Natural killer cell (primary cell): ENCODE measurements at regions of chr3 and their contacts with region 1.

Region 1: GRCh38 chr3:167723070-167723469 is 11.6 kb downstream of the PDCD10 start:
- DNase-seq: no peak
- ATAC-seq: no peak
- H3K4me3 ChIP-seq: no peak overlapping the region
- H3K4me3 Mint-ChIP-seq: no peak overlapping the region
- H3K27ac ChIP-seq: no peak overlapping the region
- H3K27ac Mint-ChIP-seq: peak overlapping the region in 1 of 2 donors; percentile 24
- H3K4me1 ChIP-seq: no peaks in the 10 kb centered on the region
- H3K4me1 Mint-ChIP-seq: peaks cover 48 to 66% of the 10 kb centered on the region in 2 donors
- H3K27me3 ChIP-seq: no peaks in the 10 kb centered on the region
- H3K27me3 Mint-ChIP-seq: no peaks in the 10 kb centered on the region
- CTCF ChIP-seq: no peak

Region 2: GRCh38 chr3:167709690-167710089 is 13.4 kb before region 1 on chr3:
- intact Hi-C with region 1: loop called (anchors 2 kb)
- DNase-seq: no peak
- ATAC-seq: no peak
- H3K4me3 ChIP-seq: no peak overlapping the region
- H3K4me3 Mint-ChIP-seq: no peak overlapping the region
- H3K27ac ChIP-seq: no peak overlapping the region
- H3K27ac Mint-ChIP-seq: peak overlapping the region in 1 of 2 donors; percentile 55
- H3K4me1 ChIP-seq: no peaks in the 10 kb centered on the region
- H3K4me1 Mint-ChIP-seq: peaks cover 74 to 84% of the 10 kb centered on the region in 2 donors
- H3K27me3 ChIP-seq: no peaks in the 10 kb centered on the region
- H3K27me3 Mint-ChIP-seq: no peaks in the 10 kb centered on the region
- CTCF ChIP-seq: no peak